OCI-LY7 (cell line): ENCODE measurements at regions of chrX and their contacts with region 1.

Region 1: GRCh38 chrX:3811331-3812311 is 98.2 kb upstream of the PRKX start:
- DNase-seq: peak; percentile 58
- H3K4me3 ChIP-seq: no peak overlapping the region
- H3K27ac ChIP-seq: no peak overlapping the region
- H3K4me1 ChIP-seq: peaks cover 18% of the 10 kb centered on the region
- CTCF ChIP-seq: peak; percentile 73

Region 2: DNA sequence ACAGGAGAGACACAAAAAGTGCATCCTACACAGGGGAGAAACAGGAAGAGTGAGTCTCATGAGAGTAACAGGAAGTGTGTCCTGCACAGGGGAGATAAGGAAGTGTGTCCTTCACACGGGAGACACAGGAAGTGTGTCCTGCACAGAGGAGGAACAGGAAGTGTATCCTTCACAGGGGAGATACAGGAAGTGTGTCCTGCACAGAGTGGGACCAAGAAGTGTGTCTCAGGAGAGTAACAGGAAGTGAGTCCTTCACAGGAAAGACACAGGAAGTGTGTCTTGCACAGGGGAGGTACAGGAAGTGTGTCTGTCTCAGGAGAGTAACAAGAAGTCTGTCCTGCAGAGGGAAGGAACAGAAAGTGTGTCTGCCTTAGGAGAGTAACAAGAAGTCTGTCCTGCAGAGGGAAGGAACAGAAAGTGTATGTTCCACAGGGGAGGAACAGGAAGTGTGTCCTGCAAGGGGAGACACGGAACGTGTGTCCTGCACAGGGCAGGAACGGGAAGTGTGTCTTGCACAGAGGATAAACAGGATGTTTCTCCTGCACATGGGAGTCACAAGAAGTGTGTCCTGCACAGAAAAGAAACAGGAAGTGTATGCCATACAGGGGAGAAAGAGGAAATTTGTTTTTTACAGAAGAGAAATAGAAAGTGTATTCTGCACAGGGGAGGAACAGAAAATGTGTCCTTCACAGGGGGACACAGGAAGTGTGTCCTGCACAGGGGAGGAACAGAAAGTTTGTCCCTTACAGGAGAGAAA is 668.4 kb before region 1 on chrX:
- CTCF ChIA-PET with region 1: no interaction called
- POLR2A ChIA-PET with region 1: no interaction called
- intact Hi-C with region 1: loop called (anchors 2 kb)
- DNase-seq: peak; percentile 59
- H3K4me3 ChIP-seq: peak overlapping the region; percentile 41
- H3K27ac ChIP-seq: peak overlapping the region; percentile 74
- H3K4me1 ChIP-seq: peaks cover 19% of the 10 kb centered on the region
- CTCF ChIP-seq: no peak

Region 3: GRCh38 chrX:3651276-3651675 is 160.3 kb before region 1 on chrX:
- CTCF ChIA-PET with region 1: no interaction called
- POLR2A ChIA-PET with region 1: no interaction called
- intact Hi-C with region 1: loop called (anchors 2 kb)
- DNase-seq: peak; percentile 24
- H3K4me3 ChIP-seq: no peak overlapping the region
- H3K27ac ChIP-seq: no peak overlapping the region
- H3K4me1 ChIP-seq: no peaks in the 10 kb centered on the region
- CTCF ChIP-seq: peak; percentile 76

Region 4: GRCh38 chrX:3777416-3777815 is 34.2 kb before region 1 on chrX:
- CTCF ChIA-PET with region 1: no interaction called
- POLR2A ChIA-PET with region 1: no interaction called
- intact Hi-C with region 1: no loop called
- DNase-seq: no peak
- H3K4me3 ChIP-seq: no peak overlapping the region
- H3K27ac ChIP-seq: no peak overlapping the region
- H3K4me1 ChIP-seq: no peaks in the 10 kb centered on the region
- CTCF ChIP-seq: no peak